ENCODE measurements at regions of chr3 and their contacts with region 1.

Region 1: GRCh38 chr3:16884084-16884747 is 539 bp upstream of the PLCL2 start:
- DNase-seq: peak; percentile 90
- CTCF ChIP-seq: peak; percentile 83

Region 2: DNA sequence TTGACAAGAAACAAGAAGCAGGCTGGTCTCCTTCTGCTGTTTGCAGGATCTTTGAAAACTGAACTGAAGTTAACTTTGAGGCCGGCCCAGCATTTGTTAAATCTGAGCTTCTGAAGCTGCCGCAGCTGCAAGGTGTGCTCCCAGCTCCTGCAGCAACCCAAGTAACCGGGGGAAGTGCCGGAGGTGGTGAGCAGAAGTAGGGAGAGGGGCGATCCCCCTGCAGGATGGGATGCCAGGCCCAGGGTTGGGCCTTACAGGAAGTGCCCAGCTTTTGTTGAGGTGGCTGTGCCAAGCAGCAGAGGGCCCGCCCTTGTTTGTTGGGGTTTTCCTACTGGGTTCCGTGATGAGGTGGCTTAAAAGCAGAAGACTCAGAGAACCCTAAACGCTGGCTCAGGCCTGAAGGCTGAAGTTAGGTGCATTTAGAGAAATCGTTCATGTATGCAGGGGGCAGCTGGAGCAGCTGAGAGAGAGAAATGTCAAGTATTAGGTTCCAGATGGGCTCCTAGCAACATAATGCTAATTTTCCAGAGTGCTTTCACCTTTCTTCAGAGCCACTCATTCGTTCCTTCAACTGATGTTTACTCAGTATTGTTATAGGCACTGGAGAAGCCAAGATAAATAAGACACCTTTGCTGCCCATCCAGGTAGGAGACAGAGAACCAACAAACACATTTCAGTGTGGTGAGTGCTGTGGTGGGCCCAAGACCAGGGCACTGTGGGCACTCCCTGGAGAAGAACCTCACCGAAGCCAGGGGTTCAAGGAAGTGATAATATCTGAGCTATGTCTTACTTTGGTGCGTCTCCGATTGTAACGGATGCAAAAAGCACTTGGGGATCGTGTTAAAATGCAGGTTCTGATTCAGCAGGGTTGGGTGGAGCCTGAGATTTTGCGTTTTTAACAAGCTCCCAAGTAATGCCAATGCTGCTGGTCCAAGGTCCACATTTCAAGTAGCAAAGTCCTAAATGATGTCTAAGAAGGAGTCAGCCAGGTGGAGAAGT is 41.6 kb before region 1 on chr3:
- CTCF ChIA-PET with region 1: interaction called, 13 read pairs
- POLR2A ChIA-PET with region 1: no interaction called
- DNase-seq: peak; percentile 52
- CTCF ChIP-seq: no peak

Region 3: DNA sequence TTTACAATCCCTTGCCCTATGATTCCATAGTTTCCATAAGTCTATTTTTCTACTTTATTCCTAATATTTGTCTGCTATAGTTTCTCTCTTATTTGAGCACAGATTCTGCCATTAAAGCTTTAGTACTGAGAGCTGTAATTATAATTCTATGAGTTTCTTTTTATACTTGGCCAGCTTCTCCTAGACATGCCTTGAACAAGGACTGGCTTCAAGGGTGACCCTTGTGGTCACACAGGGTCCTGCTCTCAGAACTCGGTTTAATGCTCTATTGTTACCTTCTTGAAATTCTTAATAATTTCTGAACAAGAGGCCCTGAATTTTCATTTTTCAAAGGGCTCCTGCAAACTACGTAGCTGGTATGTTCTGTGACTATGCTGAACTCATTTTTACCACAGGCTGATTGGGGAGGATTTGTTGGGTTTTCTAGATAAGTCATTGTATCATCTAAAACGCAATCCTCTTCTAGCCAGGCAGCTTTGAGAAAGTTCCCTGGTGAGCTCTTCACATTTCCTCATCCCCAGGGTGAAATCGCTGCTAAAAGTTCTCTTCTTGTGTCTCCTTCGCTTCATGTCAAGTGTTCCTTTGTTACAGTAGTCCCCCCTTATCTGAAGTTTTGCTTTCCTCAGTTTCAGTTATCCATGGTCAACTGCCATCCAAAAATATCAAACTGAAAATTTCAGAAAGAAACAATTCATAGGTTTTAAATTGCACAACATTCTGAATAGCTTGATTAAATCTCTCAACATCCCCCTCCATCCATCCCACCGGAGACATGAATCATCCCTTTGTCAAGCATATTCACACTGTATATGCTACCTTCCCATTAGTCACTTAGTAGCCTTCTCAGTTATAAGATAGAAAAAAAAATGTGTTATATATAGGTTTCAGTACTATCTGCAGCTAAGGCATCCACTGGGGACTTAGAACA is 12.0 kb before region 1 on chr3:
- CTCF ChIA-PET with region 1: interaction called, 44 read pairs
- POLR2A ChIA-PET with region 1: no interaction called
- DNase-seq: no peak
- CTCF ChIP-seq: no peak

Region 4: DNA sequence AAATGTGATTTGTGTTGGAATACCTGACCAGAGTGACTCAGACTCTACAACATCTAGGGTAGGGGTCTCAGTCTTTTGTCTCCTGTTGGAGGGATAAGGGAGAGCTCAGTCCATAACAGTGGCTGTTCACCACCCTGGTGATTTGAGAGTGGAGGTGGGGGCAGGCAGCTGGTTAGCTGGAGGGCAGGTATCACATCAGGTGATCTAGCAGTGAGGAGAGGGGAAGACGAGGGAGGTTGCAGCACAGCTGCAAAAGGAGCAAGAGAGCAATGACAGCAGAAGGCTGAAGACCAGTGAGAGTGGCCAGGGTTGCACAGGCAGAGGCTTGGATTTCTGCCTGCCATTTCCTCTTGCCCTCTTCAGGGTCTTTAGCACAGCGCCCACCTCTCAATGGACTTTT is 38.9 kb after region 1 on chr3:
- CTCF ChIA-PET with region 1: interaction called, 10 read pairs
- POLR2A ChIA-PET with region 1: no interaction called
- DNase-seq: no peak
- CTCF ChIP-seq: no peak

Measured in GM10248 (cell line).